ENCODE measurements at regions of chrX and their contacts with region 1.

Region 1: DNA sequence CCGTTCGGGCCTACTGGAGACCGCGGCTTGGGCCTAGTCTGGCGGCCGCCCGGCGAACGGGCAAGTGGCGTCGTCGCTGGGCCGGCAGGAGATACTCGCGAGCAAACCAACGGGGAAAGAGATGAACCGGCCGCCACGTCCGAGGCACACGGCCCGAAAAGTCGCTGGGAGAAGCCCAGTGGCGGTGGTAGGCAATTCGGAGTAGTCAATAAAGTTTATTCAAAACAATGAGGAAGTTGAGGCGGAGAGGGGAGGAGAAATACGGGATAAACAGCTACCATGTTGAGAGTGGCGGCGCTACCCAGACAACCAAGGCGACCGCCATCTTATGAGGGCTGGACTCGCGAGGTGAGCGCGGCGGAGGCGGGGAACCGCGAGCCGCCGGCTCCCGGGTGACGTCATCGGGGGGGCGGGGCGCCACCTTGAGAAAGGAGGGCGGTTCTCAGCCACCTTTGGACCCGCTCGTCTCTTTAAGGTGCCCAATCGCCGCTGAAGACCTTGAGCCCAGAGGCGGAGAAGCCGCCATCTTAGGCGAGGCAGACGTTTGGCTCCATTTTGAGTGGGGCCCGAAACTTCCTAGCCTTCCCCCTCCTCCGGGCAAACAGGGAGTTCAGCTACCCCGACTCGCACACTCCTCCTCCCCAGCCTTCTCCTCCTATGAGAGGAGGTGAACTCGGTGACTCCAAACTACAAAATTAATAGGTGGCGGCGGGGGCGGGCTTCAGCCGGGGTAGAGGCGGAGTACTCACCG is at the start of gene PHF8:
- DNase-seq: peak; percentile 98
- H3K4me3 Mint-ChIP-seq: peak within 1 kb of the TSS; percentile 93
- H3K27ac Mint-ChIP-seq: peak within 1 kb of the TSS; percentile 98
- H3K4me1 Mint-ChIP-seq: peaks cover 16% of the 10 kb centered on the region
- H3K27me3 Mint-ChIP-seq: no peaks in the 10 kb centered on the region
- total RNA-seq, gene PHF8: 50.7 and 53.4 TPM in 2 replicates

Region 2: GRCh38 chrX:53081925-53082772 is 962.2 kb before region 1 on chrX and contains the start of gene TSPYL2:
- intact Hi-C with region 1: loop called (anchors 10 kb)
- DNase-seq: peak; percentile 97
- H3K4me3 Mint-ChIP-seq: peak within 1 kb of the TSS; percentile 96
- H3K27ac Mint-ChIP-seq: peak within 1 kb of the TSS; percentile 98
- H3K4me1 Mint-ChIP-seq: peaks cover 31% of the 10 kb centered on the region
- H3K27me3 Mint-ChIP-seq: no peaks in the 10 kb centered on the region
- total RNA-seq, gene TSPYL2: 37.3 and 40.3 TPM in 2 replicates

Region 3: GRCh38 chrX:53422086-53422860 is 622.0 kb before region 1 on chrX and contains the start of gene SMC1A:
- intact Hi-C with region 1: loop called (anchors 5 kb)
- DNase-seq: peak; percentile 98
- H3K4me3 Mint-ChIP-seq: peak within 1 kb of the TSS; percentile 98
- H3K27ac Mint-ChIP-seq: peak within 1 kb of the TSS; percentile 98
- H3K4me1 Mint-ChIP-seq: peaks cover 24% of the 10 kb centered on the region
- H3K27me3 Mint-ChIP-seq: no peaks in the 10 kb centered on the region
- total RNA-seq, gene SMC1A: 141 and 144 TPM in 2 replicates

Region 4: GRCh38 chrX:54182864-54183608 is 138.7 kb after region 1 on chrX and contains the start of gene FAM120C:
- intact Hi-C with region 1: loop called (anchors 1 kb)
- DNase-seq: peak; percentile 84
- H3K4me3 Mint-ChIP-seq: peak within 1 kb of the TSS; percentile 88
- H3K27ac Mint-ChIP-seq: peak within 1 kb of the TSS; percentile 92
- H3K4me1 Mint-ChIP-seq: peaks cover 37% of the 10 kb centered on the region
- H3K27me3 Mint-ChIP-seq: no peaks in the 10 kb centered on the region
- total RNA-seq, gene FAM120C: 10.8 and 11.4 TPM in 2 replicates

Region 5: GRCh38 chrX:54439967-54440871 is 395.9 kb after region 1 on chrX and contains the start of gene TSR2:
- intact Hi-C with region 1: loop called (anchors 1 kb)
- DNase-seq: peak; percentile 93
- H3K4me3 Mint-ChIP-seq: peak within 1 kb of the TSS; percentile 96
- H3K27ac Mint-ChIP-seq: peak within 1 kb of the TSS; percentile 92
- H3K4me1 Mint-ChIP-seq: peaks cover 14% of the 10 kb centered on the region
- H3K27me3 Mint-ChIP-seq: no peaks in the 10 kb centered on the region
- total RNA-seq, gene TSR2: 40.8 and 43.7 TPM in 2 replicates

Region 6: GRCh38 chrX:55057675-55058249 is 1013.5 kb after region 1 on chrX:
- intact Hi-C with region 1: loop called (anchors 5 kb)
- DNase-seq: peak; percentile 72
- H3K4me3 Mint-ChIP-seq: peak overlapping the region; percentile 74
- H3K27ac Mint-ChIP-seq: no peak overlapping the region
- H3K4me1 Mint-ChIP-seq: peaks cover 10% of the 10 kb centered on the region
- H3K27me3 Mint-ChIP-seq: no peaks in the 10 kb centered on the region

Region 7: DNA sequence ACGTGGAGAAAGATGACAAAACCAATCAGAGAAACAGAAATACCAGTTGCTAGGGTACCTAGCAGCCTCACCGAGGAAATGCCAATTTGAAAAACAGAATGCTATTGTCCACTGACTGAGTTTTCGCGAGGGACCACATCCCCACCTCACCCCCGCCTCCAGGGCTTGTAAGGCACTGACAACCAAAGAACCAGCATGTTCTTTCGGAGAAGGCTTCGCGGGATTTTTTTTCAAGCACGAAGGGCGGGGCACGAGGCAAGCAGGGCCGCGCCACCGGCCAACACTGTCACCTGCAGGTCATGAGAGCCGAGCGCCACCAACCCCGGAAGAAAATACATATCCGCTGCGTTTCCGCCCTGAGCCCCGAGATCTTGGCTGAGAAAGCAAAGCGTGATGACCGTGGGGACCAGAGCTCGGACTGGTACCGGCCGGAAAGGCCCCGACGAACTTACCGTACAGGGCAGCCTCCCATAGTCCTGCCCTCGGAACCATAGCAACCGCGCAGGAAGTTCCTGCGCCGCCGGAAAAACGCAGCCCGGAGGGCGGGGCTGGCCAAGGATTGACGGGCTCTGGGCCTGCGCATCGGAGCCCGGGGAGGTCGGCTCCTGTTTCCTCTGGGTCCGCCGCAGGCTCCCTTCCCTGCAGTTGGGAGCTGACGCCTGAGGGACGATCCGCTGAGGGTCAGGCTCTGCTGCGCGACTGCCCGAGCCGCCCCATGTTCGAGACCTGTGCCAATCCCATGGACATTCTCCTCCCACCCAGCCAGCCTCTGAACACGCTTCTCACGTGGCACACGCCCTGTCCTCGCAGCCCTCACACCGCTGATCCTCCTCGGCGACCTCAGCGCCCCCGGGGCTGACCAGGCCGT is 1116.6 kb after region 1 on chrX:
- intact Hi-C with region 1: loop called (anchors 5 kb)
- DNase-seq: peak; percentile 96
- H3K4me3 Mint-ChIP-seq: peak overlapping the region; percentile 90
- H3K27ac Mint-ChIP-seq: peak overlapping the region; percentile 97
- H3K4me1 Mint-ChIP-seq: peaks cover 10% of the 10 kb centered on the region
- H3K27me3 Mint-ChIP-seq: peaks cover 13% of the 10 kb centered on the region

Measured in activated CD4-positive, alpha-beta T cell treated with anti-CD3 and anti-CD28 coated beads, Interleukin-2, amount 10 ng/mL, durations not matched to agents 24 days and 14 days (primary cell).